ENCODE measurements at regions of chr1 and their contacts with region 1.

Region 1: DNA sequence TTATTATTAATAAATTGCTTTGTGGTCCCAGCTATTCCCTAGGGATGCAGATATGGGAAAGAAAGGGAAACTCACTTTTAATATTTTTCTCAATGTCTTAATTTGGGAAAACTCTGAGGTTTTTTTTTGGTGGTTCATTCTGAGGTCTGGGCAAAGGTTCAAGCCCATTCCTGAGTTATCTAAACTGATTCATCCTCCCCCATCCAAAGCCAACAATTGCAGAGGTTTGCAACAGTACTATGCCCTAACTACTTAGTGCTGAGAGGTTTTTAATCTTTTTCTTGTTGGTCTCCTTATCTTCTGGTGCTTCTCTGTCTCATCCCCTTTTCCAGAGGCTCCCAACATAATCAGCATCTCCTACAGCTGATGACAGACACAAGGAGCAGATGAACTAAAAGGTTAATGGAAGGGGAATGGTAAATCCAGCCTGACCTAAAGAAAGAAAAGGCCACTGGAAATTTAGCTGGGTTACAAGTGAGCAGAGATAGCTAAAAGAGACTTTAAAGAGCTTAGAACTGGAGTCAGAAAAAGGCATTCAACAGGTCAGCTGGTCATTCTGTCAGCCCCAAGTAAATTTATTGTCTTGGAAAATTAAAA is 390.4 kb downstream of the TGFB2 start:
- DNase-seq: peak; percentile 48
- H3K4me3 Mint-ChIP-seq: no peak overlapping the region
- H3K27ac Mint-ChIP-seq: no peak overlapping the region
- H3K4me1 Mint-ChIP-seq: peaks cover 10% of the 10 kb centered on the region
- H3K27me3 Mint-ChIP-seq: no peaks in the 10 kb centered on the region
- CTCF ChIP-seq: no peak

Region 2: GRCh38 chr1:218751188-218751948 is 15.8 kb after region 1 on chr1:
- CTCF ChIA-PET with region 1: interaction called, 12 read pairs
- POLR2A ChIA-PET with region 1: interaction called, 3 read pairs
- intact Hi-C with region 1: no loop called
- DNase-seq: no peak
- H3K4me3 Mint-ChIP-seq: no peak overlapping the region
- H3K27ac Mint-ChIP-seq: no peak overlapping the region
- H3K4me1 Mint-ChIP-seq: no peaks in the 10 kb centered on the region
- H3K27me3 Mint-ChIP-seq: no peaks in the 10 kb centered on the region
- CTCF ChIP-seq: no peak

Measured in MCF 10A (cell line).